GM10248 (cell line): ENCODE measurements at regions of chr16 and their contacts with region 1.

Region 1: DNA sequence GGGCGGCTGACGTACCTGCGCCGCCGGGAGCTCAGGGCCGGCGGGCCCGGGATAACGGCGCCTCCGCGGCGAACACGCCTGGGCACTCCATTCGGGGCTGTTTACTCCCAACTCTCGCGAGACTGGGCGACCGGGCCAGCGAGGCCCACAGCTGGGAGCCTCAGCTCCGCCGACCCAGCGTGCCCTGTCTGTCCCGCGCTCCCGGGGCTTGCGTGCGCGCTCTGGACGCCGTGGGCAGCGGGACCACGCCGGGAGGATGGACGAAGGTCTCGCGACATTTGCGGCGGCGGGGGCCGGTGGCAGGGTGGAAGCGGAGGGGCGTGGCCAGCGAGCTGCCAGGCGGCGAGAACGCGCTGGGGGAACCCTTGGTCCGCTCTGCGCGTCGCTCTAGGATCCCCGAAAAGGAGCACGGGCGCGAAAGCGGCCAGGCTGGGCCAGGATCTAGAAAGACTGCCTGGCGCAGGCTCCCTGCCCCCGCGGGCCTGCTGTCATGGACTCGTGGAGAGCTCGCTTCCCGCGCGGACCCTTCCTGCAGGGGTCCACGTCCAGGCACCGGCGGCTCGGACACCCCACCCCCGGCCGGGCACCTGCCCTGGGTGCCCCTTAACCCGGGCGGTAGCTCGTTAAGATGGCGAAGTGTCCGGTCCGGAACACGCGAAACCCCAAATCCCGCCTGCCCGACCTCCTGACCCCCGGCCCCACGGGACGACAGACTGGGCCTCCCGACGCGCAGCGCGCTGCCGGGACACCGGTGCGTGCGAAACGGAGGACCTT is at the start of gene MBTPS1:
- DNase-seq: peak; percentile 97
- CTCF ChIP-seq: no peak

Region 2: GRCh38 chr16:84084570-84085270 is 32.2 kb before region 1 on chr16:
- CTCF ChIA-PET with region 1: interaction called, 24 read pairs
- POLR2A ChIA-PET with region 1: interaction called, 3 read pairs
- DNase-seq: peak; percentile 85
- CTCF ChIP-seq: peak; percentile 94

Region 3: GRCh38 chr16:84096115-84097012 is 20.5 kb before region 1 on chr16:
- CTCF ChIA-PET with region 1: interaction called, 10 read pairs
- POLR2A ChIA-PET with region 1: no interaction called
- DNase-seq: no peak
- CTCF ChIP-seq: no peak

Region 4: DNA sequence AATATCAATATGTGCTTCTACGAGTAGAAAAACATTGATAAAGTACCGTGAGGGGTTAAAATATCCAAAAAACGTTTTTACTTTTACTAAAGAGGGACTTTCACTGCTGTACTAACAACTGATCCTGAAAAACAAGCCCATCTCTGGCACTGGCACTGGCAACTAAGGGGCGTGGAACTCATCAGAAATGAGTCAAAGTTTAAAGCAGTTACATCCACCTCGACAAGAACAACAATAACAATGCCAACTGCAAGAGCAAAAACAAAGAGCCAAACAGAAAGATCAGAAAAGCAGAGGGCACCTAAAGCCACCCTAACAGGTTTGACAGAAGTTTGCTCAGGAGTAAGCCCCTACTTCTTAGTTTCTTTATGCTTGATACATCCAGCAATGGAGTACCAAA is 13.2 kb before region 1 on chr16:
- CTCF ChIA-PET with region 1: interaction called, 35 read pairs
- POLR2A ChIA-PET with region 1: interaction called, 3 read pairs
- DNase-seq: no peak
- CTCF ChIP-seq: no peak

Region 5: GRCh38 chr16:84132527-84133285 is 15.8 kb after region 1 on chr16:
- CTCF ChIA-PET with region 1: interaction called, 18 read pairs
- POLR2A ChIA-PET with region 1: interaction called, 6 read pairs
- DNase-seq: peak; percentile 35
- CTCF ChIP-seq: no peak